ENCODE measurements at regions of chr4 and their contacts with region 1.

Region 1: GRCh38 chr4:170259631-170260153 is 169.9 kb upstream of the AADAT start:
- DNase-seq: peak; percentile 88
- H3K4me3 ChIP-seq: no peak overlapping the region
- H3K27ac ChIP-seq: no peak overlapping the region
- H3K4me1 ChIP-seq: no peaks in the 10 kb centered on the region
- CTCF ChIP-seq: peak; percentile 100

Region 2: DNA sequence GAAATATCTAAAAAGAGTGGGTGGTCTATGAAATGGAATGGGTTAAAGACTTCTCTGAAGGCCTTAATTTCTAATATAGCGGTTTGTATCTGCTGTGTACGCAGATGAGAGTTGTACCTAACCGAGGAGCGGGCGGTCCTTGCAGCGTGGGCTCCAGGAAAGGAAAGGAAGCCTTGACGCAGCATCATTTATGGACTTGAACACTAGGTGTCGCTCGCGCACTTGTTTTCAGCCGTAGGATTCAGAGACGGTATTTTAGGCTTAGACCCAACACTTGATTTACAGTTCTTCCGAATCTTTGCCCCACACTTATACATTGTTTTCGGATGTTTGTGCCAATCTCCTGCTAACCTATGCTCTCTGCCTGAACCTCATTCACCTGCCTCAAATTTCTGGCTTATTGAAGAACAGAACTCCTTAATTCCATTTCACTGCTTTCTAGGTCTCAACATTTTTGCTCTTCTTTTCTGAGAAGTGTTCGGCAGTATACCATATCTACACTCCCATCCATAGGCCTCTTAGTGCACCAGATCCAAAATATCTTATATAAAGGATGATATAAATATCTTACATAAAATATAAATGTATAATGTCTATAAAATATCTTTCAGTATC is 121.0 kb before region 1 on chr4:
- CTCF ChIA-PET with region 1: interaction called, 3 read pairs
- POLR2A ChIA-PET with region 1: no interaction called
- intact Hi-C with region 1: loop called (anchors 1 kb)
- DNase-seq: peak; percentile 62
- H3K4me3 ChIP-seq: no peak overlapping the region
- H3K27ac ChIP-seq: no peak overlapping the region
- H3K4me1 ChIP-seq: no peaks in the 10 kb centered on the region
- CTCF ChIP-seq: peak; percentile 84

Region 3: GRCh38 chr4:170202721-170203120 is 57.0 kb before region 1 on chr4:
- CTCF ChIA-PET with region 1: no interaction called
- POLR2A ChIA-PET with region 1: no interaction called
- intact Hi-C with region 1: no loop called
- DNase-seq: peak; percentile 16
- H3K4me3 ChIP-seq: no peak overlapping the region
- H3K27ac ChIP-seq: no peak overlapping the region
- H3K4me1 ChIP-seq: no peaks in the 10 kb centered on the region
- CTCF ChIP-seq: no peak

Region 4: GRCh38 chr4:170374770-170375169 is 115.1 kb after region 1 on chr4:
- CTCF ChIA-PET with region 1: interaction called, 4 read pairs
- POLR2A ChIA-PET with region 1: no interaction called
- intact Hi-C with region 1: loop called (anchors 1 kb)
- DNase-seq: peak; percentile 32
- H3K4me3 ChIP-seq: no peak overlapping the region
- H3K27ac ChIP-seq: no peak overlapping the region
- H3K4me1 ChIP-seq: no peaks in the 10 kb centered on the region
- CTCF ChIP-seq: peak; percentile 75

Region 5: GRCh38 chr4:170420254-170420693 is 160.6 kb after region 1 on chr4:
- CTCF ChIA-PET with region 1: no interaction called
- POLR2A ChIA-PET with region 1: no interaction called
- intact Hi-C with region 1: no loop called
- DNase-seq: peak; percentile 5
- H3K4me3 ChIP-seq: no peak overlapping the region
- H3K27ac ChIP-seq: no peak overlapping the region
- H3K4me1 ChIP-seq: no peaks in the 10 kb centered on the region
- CTCF ChIP-seq: no peak

Region 6: GRCh38 chr4:170853422-170854021 is 593.8 kb after region 1 on chr4:
- CTCF ChIA-PET with region 1: no interaction called
- POLR2A ChIA-PET with region 1: no interaction called
- intact Hi-C with region 1: loop called (anchors 1 kb)
- DNase-seq: peak; percentile 45
- H3K4me3 ChIP-seq: no peak overlapping the region
- H3K27ac ChIP-seq: no peak overlapping the region
- H3K4me1 ChIP-seq: no peaks in the 10 kb centered on the region
- CTCF ChIP-seq: peak; percentile 93

Measured in OCI-LY7 (cell line).